ENCODE measurements at regions of chr17 and their contacts with region 1.

Region 1: DNA sequence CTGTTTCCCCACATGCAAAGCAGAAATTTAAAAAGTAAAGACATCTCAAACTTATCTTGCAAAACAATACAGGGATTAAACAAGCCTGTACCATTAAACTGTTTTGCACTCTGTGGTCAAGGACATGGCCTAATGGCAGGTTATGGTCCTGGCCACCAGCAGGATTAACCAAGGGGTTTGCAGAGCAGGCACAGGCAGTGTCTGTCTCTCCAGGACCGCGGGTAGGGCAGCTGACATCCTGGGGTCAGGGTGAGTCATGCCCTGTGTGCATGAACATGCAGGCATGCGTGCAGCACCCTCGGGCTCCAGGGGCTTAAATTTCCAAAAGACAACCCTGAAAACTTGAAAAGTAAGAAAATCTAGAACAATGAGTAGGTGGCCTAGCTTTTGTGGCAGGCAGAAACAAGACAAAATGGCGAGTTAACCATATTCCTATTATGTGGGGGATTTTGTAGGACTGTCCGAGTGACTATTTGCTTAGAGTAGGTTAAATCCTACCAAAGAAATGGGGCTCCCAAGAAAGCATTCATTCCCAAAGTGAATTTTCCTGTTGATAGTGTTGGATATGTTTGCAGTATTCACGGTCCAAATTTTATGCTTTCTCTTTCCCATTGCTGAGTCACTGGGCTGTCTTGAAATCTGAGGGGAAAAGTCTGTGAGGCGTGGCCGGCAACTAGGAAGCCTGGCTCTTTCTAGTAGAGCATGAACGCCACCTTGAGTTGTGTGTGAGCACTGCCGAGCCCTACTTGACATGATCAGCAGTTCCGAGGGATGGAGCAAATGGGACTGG is 158.4 kb upstream of the FAM20A start:
- DNase-seq: peak; percentile 83 to 90 (median 89)
- H3K4me3 ChIP-seq: peak overlapping the region; percentile 54 to 92 (median 75)
- H3K4me3 Mint-ChIP-seq: peak overlapping the region; percentile 87 to 94
- H3K27ac ChIP-seq: peak overlapping the region; percentile 16 to 87
- H3K27ac Mint-ChIP-seq: peak overlapping the region; percentile 91 to 97 (median 95)
- H3K4me1 ChIP-seq: peaks cover 7 to 8% of the 10 kb centered on the region in 2 donors
- H3K4me1 Mint-ChIP-seq: peaks cover 12% of the 10 kb centered on the region
- H3K27me3 ChIP-seq: no peaks in the 10 kb centered on the region
- H3K27me3 Mint-ChIP-seq: peaks cover 0 to 2% (median 0%) of the 10 kb centered on the region in 3 donors
- CTCF ChIP-seq: peak; percentile 80

Region 2: DNA sequence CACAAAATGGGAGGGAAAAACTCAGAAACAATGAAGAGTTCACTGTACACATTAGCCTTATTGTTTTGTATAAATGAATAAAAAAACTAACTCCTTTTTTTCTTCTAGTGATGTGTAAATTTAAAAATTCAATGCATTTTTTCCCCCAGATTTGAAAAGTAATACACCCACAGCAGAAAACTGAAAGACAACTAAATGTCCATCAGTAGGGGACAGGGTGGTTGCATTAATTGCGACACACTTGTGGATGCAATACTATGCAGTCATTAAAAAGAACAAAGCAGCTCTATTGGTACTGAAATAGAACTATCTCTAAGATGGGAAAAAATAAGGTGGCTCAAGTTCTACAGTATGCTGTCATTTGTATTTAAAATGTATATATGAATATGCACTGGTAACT is 288.6 kb before region 1 on chr17:
- intact Hi-C with region 1: loop called in 1 of 2 experiments (anchors 10 kb)
- DNase-seq: no peak
- H3K4me3 ChIP-seq: no peak overlapping the region
- H3K4me3 Mint-ChIP-seq: no peak overlapping the region
- H3K27ac ChIP-seq: no peak overlapping the region
- H3K27ac Mint-ChIP-seq: no peak overlapping the region
- H3K4me1 ChIP-seq: peaks cover 0 to under 1% of the 10 kb centered on the region in 2 donors
- H3K4me1 Mint-ChIP-seq: peaks cover 9% of the 10 kb centered on the region
- H3K27me3 ChIP-seq: no peaks in the 10 kb centered on the region
- H3K27me3 Mint-ChIP-seq: peaks cover 2 to 8% (median 7%) of the 10 kb centered on the region in 3 donors
- CTCF ChIP-seq: no peak

Region 3: DNA sequence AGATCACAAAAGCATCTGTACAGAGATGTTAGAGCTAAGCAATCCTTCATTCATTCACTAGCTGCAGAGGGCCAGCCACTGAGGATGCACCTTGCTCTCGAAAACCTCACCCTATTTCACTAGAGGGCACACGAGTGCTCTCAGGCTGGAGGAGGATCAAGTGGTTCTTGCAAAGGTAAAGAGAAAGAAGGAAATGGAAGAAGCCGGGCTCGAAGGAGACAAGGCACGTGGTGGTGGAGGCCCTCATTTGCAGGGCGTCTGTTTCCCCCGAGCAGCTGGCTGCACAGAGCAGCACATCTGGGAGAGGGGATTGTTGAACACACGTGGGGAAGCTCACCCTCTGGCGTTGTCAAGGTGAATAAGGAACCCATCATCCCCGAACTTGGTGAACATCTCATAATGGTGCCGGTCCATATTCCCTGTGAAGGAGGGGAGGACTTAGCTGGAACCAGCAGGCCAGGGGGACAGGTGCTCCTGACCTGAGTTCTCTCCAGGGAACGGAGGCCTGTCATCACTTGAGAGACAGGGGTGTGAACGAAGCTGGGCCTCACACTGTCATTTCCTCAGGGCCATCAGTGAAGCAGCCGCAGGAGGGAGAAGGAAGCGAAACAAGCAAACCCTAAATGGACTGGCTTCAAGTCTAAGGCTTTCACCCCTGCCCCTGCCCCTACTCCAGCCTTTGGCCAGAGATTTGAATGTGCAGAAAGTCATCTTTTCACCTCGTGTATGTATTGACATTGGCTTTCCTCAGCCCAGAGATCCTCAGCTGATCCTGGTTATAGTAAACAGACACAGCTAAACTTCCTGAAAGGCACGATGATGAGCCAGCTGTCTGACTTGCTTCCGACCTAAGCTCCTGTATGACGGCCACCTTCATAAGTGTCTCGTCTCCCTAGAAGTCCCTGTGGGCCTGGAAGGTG is 219.7 kb before region 1 on chr17:
- intact Hi-C with region 1: loop called (anchors 5 kb)
- DNase-seq: peak in 2 of 3 donors; percentile 4 to 17
- H3K4me3 ChIP-seq: no peak overlapping the region
- H3K4me3 Mint-ChIP-seq: peak overlapping the region in 1 of 2 donors; percentile 36
- H3K27ac ChIP-seq: peak overlapping the region; percentile 0 to 54
- H3K27ac Mint-ChIP-seq: peak overlapping the region in 6 of 7 donors; percentile 23 to 87 (median 62)
- H3K4me1 ChIP-seq: peaks cover 9 to 11% of the 10 kb centered on the region in 2 donors
- H3K4me1 Mint-ChIP-seq: peaks cover 15% of the 10 kb centered on the region
- H3K27me3 ChIP-seq: no peaks in the 10 kb centered on the region
- H3K27me3 Mint-ChIP-seq: peaks cover 2% of the 10 kb centered on the region in 3 donors
- CTCF ChIP-seq: peak; percentile 55

Region 4: GRCh38 chr17:68600067-68600930 is 159.2 kb before region 1 on chr17:
- intact Hi-C with region 1: loop called in 1 of 2 experiments (anchors 10 kb)
- DNase-seq: peak; percentile 12 to 46 (median 38)
- H3K4me3 ChIP-seq: peak overlapping the region; percentile 37 to 72 (median 45)
- H3K4me3 Mint-ChIP-seq: peak overlapping the region; percentile 86 to 91
- H3K27ac ChIP-seq: no peak overlapping the region
- H3K27ac Mint-ChIP-seq: peak overlapping the region in 3 of 7 donors; percentile 46 to 93 (median 82)
- H3K4me1 ChIP-seq: peaks cover 42 to 50% of the 10 kb centered on the region in 2 donors
- H3K4me1 Mint-ChIP-seq: peaks cover 47% of the 10 kb centered on the region
- H3K27me3 ChIP-seq: peaks cover 58 to 67% of the 10 kb centered on the region in 2 donors
- H3K27me3 Mint-ChIP-seq: peaks cover 52 to 67% (median 60%) of the 10 kb centered on the region in 3 donors
- CTCF ChIP-seq: no peak